ENCODE measurements at regions of chr1 and their contacts with region 1.

Region 1: DNA sequence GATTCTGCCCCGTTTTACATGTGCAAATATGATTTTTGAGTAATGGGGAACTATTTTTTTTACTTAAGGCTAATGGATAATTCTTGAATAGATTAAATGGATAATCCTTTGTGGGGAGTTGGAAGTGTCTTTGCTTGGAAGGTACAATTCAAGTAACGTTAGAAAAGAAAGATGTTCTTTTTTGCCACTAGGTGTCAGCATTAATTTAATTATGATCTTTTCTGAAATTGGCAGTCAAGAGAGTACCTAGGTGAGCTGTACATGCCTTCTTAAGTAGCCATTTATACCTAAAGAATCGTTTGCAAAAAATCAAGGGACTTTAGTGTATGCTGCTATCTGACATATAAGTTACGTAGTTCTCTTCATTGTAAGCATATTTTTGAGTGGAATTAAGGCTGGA is 2.2 kb downstream of the FBXO28 start:
- H3K4me3 ChIP-seq: no peak overlapping the region
- H3K27ac ChIP-seq: no peak overlapping the region
- H3K4me1 ChIP-seq: peaks cover 5% of the 10 kb centered on the region
- CTCF ChIP-seq: no peak

Region 2: DNA sequence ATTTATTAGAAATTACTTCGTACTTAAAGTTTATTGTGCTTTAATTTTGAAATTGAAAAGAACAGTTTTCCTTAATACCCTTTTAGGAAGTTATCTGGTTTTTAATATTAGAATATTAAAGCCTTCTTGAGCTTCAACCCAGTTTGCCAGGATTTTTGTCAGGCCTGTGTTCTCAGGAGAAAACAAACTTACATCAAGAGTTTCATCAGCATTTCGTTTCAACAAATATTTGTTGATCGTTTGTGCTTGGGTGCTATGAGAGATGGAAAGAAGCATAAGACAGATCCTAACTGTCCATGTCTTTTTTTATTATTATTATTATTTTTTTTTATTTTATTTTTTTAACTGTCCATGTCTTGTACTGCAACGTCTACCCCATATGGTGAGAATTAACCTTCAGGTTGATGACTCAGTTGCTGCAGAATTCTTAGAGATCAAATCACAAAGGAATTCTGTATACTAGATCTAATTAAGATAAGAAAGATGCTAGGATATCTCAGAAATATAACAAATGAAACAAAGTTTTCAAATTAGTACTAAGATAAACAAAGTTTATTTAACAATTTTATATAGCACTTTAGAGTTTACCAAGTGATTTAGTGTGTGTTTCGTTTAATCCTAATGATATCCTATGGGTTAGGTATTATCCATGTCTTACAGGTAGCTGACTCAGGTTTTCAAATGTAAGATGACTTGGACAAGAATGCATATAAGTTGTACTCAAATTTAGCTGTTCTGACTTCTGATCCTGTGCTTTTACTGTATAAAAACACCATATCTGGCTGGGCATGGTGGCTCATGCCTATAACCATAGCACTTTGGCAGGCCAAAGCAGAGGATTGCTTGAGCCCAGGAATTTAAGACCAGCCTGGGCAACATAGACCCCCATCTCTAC is 12.0 kb after region 1 on chr1:
- CTCF ChIA-PET with region 1: interaction called, 15 read pairs
- POLR2A ChIA-PET with region 1: interaction called, 6 read pairs
- H3K4me3 ChIP-seq: no peak overlapping the region
- H3K27ac ChIP-seq: no peak overlapping the region
- H3K4me1 ChIP-seq: no peaks in the 10 kb centered on the region
- CTCF ChIP-seq: no peak

Region 3: DNA sequence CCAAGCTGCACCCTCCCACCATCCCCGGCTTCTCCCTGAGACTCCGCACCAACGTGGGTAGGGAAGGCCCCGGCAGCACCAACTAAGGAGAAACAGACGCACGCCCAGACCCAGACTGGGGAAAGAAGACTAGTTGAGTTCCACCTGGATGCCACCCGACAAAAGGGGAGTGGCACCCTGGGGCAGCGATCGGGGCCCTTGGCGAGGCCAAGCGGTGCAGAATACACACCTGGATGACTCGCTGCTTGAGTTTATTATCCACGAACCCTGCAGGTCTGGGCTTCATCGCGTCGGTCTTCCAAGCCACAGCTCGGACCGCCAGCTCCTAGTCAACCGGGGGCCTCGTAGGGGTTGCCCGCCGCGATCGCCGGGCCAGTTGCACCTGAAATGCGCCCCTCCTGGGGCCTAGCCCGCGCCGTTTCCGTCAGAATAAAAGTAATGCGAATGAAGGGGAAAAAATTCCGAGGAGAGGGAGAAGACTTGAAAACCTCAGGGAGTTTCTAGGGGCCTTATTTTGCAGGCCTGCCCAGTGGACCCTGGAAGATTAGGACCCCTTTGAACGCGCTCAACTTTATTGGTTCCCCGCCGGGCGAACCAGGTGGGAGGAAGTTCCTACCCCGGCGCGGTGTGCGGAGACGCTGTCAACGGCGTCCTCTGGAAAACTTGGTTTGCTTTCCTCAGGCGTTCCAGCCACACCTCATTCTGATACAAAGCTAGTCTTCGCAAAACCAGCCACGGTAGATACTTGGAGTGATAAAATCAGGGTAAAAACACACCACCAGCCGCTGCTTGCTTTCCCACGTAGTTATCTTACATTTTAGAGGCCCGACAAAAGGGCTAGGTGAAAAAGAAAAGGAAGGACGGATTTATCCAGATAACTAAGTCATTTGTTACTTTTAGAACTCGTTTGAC is 214.0 kb after region 1 on chr1 and contains the start of gene NVL:
- CTCF ChIA-PET with region 1: interaction called, 76 read pairs
- POLR2A ChIA-PET with region 1: interaction called, 10 read pairs
- H3K4me3 ChIP-seq: peak within 1 kb of the TSS; percentile 79
- H3K27ac ChIP-seq: peak within 1 kb of the TSS; percentile 97
- H3K4me1 ChIP-seq: peaks cover 3% of the 10 kb centered on the region; the same call in 1 of the 2 replicates
- CTCF ChIP-seq: no peak

Region 4: GRCh38 chr1:224425279-224425884 is 309.3 kb after region 1 on chr1:
- CTCF ChIA-PET with region 1: no interaction called
- POLR2A ChIA-PET with region 1: no interaction called
- H3K4me3 ChIP-seq: no peak overlapping the region
- H3K27ac ChIP-seq: no peak overlapping the region
- H3K4me1 ChIP-seq: peaks cover 12% of the 10 kb centered on the region; the same call in 1 of the 2 replicates
- CTCF ChIP-seq: no peak

Measured in HEK293 (cell line).